ENCODE measurements at regions of chr14 and their contacts with region 1.

Region 1: GRCh38 chr14:78598041-78598920 is 428.1 kb downstream of the NRXN3 start:
- DNase-seq: peak; percentile 4
- H3K4me3 Mint-ChIP-seq: no peak overlapping the region
- H3K27ac Mint-ChIP-seq: no peak overlapping the region
- H3K4me1 Mint-ChIP-seq: no peaks in the 10 kb centered on the region
- H3K27me3 Mint-ChIP-seq: no peaks in the 10 kb centered on the region

Region 2: DNA sequence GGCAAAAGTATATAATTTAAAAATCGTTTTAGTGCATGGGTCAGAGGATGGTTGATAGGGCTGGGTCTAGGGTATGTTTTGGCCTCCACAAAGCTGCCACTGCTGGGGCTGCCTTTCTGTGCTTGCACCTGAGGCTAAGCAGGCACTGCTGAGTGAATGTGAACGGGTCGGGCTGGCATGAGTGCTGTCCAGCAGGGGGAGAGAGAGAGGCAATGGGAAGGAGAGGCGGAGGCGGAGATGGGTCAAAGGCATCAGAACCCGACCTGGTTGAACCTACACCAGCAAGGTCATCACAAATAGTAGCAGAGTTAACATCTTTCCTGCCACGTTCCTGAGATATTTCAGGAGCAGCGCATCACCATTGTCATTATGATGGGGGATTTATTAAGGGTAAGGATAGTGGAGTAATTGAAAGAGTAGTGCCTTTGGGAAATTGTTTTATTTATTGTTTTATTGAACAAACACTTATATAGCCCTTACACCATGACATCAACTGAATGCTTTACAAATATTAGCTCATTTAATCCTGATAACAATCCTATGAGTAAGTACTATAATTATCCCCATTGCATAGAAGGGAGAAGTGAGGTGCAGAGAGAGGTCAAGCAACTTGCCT is 433.9 kb before region 1 on chr14:
- intact Hi-C with region 1: loop called (anchors 10 kb)
- DNase-seq: no peak
- H3K4me3 Mint-ChIP-seq: no peak overlapping the region
- H3K27ac Mint-ChIP-seq: no peak overlapping the region
- H3K4me1 Mint-ChIP-seq: no peaks in the 10 kb centered on the region
- H3K27me3 Mint-ChIP-seq: peaks cover 2% of the 10 kb centered on the region

Region 3: GRCh38 chr14:78566026-78566858 is 32.0 kb before region 1 on chr14:
- intact Hi-C with region 1: no loop called
- DNase-seq: peak; percentile 19
- H3K4me3 Mint-ChIP-seq: no peak overlapping the region
- H3K27ac Mint-ChIP-seq: no peak overlapping the region
- H3K4me1 Mint-ChIP-seq: no peaks in the 10 kb centered on the region
- H3K27me3 Mint-ChIP-seq: no peaks in the 10 kb centered on the region

Region 4: DNA sequence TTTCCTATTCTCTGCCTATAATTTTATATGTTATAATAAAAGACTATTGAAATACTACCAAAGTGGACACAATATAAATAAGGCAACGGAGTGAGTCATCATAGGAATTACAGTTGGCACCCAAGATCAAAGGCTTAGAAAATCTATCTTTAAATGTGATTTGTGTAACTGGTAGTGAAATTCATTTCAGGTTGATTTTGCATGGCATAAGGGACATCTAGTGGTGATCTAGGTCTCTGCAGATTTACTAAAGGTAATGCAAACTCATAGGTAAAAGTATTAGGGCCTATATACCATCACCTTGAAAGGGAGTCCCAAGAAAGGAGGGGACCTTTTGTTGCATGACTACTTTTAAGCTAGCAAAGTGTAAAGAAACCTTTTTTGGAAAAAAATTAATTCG is 99.1 kb after region 1 on chr14:
- intact Hi-C with region 1: loop called (anchors 10 kb)
- DNase-seq: no peak
- H3K4me3 Mint-ChIP-seq: no peak overlapping the region
- H3K27ac Mint-ChIP-seq: no peak overlapping the region
- H3K4me1 Mint-ChIP-seq: no peaks in the 10 kb centered on the region
- H3K27me3 Mint-ChIP-seq: no peaks in the 10 kb centered on the region

Region 5: GRCh38 chr14:78959674-78960264 is 361.5 kb after region 1 on chr14:
- intact Hi-C with region 1: no loop called
- DNase-seq: peak; percentile 3
- H3K4me3 Mint-ChIP-seq: no peak overlapping the region
- H3K27ac Mint-ChIP-seq: no peak overlapping the region
- H3K4me1 Mint-ChIP-seq: no peaks in the 10 kb centered on the region
- H3K27me3 Mint-ChIP-seq: peaks cover 2% of the 10 kb centered on the region